ENCODE measurements at regions of chr3 and their contacts with region 1.

Region 1: GRCh38 chr3:167941234-167941995 is 154.3 kb downstream of the GOLIM4 start:
- DNase-seq: no peak
- ATAC-seq: peak; percentile 31
- H3K4me3 ChIP-seq: no peak overlapping the region
- H3K4me3 Mint-ChIP-seq: no peak overlapping the region
- H3K27ac ChIP-seq: no peak overlapping the region
- H3K27ac Mint-ChIP-seq: no peak overlapping the region
- H3K4me1 ChIP-seq: no peaks in the 10 kb centered on the region
- H3K4me1 Mint-ChIP-seq: peaks cover 0 to 9% (median 0%) of the 10 kb centered on the region in 7 donors
- H3K27me3 ChIP-seq: peaks cover 0 to 3% of the 10 kb centered on the region in 2 donors
- H3K27me3 Mint-ChIP-seq: peaks cover 1 to 33% (median 7%) of the 10 kb centered on the region in 5 donors

Region 2: GRCh38 chr3:167952969-167953368 is 11.6 kb after region 1 on chr3:
- CTCF ChIA-PET with region 1: no interaction called
- POLR2A ChIA-PET with region 1: no interaction called
- intact Hi-C with region 1: loop called in 1 of 2 experiments (anchors 1 kb)
- DNase-seq: no peak
- ATAC-seq: no peak
- H3K4me3 ChIP-seq: no peak overlapping the region
- H3K4me3 Mint-ChIP-seq: no peak overlapping the region
- H3K27ac ChIP-seq: no peak overlapping the region
- H3K27ac Mint-ChIP-seq: no peak overlapping the region
- H3K4me1 ChIP-seq: no peaks in the 10 kb centered on the region
- H3K4me1 Mint-ChIP-seq: no peaks in the 10 kb centered on the region
- H3K27me3 ChIP-seq: no peaks in the 10 kb centered on the region
- H3K27me3 Mint-ChIP-seq: peaks cover 0 to 3% (median 0%) of the 10 kb centered on the region in 5 donors

Region 3: DNA sequence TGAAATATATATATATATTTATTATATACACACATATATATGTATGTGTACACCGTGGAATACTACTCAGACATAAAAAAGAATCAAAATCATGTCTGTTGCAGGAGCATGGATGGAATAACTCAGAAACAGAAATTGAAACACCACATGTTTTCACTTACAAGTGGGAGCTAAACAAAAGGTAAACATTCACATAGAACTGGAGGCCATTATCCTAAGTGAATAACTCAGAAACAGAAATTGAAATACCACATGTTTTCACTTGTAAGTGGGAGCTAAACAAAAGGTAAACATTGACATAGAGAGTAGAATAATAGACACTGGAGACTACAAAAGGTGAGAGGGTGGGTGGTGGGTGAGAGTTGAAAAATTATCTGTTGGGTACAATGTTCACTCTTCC is 325.8 kb after region 1 on chr3:
- CTCF ChIA-PET with region 1: no interaction called
- POLR2A ChIA-PET with region 1: no interaction called
- intact Hi-C with region 1: no loop called
- DNase-seq: no peak
- ATAC-seq: no peak
- H3K4me3 ChIP-seq: no peak overlapping the region
- H3K4me3 Mint-ChIP-seq: no peak overlapping the region
- H3K27ac ChIP-seq: no peak overlapping the region
- H3K27ac Mint-ChIP-seq: no peak overlapping the region
- H3K4me1 ChIP-seq: no peaks in the 10 kb centered on the region
- H3K4me1 Mint-ChIP-seq: no peaks in the 10 kb centered on the region
- H3K27me3 ChIP-seq: no peaks in the 10 kb centered on the region
- H3K27me3 Mint-ChIP-seq: no peaks in the 10 kb centered on the region